CD4-positive, alpha-beta memory T cell (primary cell): ENCODE measurements at regions of chr9 and their contacts with region 1.

Region 1: GRCh38 chr9:11064897-11065296 is 452.1 kb upstream of the PTPRD start:
- DNase-seq: no peak
- H3K4me3 ChIP-seq: no peak overlapping the region
- H3K4me3 Mint-ChIP-seq: no peak overlapping the region
- H3K27ac ChIP-seq: no peak overlapping the region
- H3K27ac Mint-ChIP-seq: no peak overlapping the region
- H3K4me1 ChIP-seq: no peaks in the 10 kb centered on the region
- H3K4me1 Mint-ChIP-seq: no peaks in the 10 kb centered on the region
- H3K27me3 ChIP-seq: no peaks in the 10 kb centered on the region
- H3K27me3 Mint-ChIP-seq: no peaks in the 10 kb centered on the region

Region 2: GRCh38 chr9:10251490-10251889 is 813.4 kb before region 1 on chr9:
- CTCF ChIA-PET with region 1: no interaction called
- POLR2A ChIA-PET with region 1: no interaction called
- intact Hi-C with region 1: no loop called
- DNase-seq: no peak
- H3K4me3 ChIP-seq: no peak overlapping the region
- H3K4me3 Mint-ChIP-seq: no peak overlapping the region
- H3K27ac ChIP-seq: no peak overlapping the region
- H3K27ac Mint-ChIP-seq: no peak overlapping the region
- H3K4me1 ChIP-seq: no peaks in the 10 kb centered on the region
- H3K4me1 Mint-ChIP-seq: no peaks in the 10 kb centered on the region
- H3K27me3 ChIP-seq: no peaks in the 10 kb centered on the region
- H3K27me3 Mint-ChIP-seq: no peaks in the 10 kb centered on the region

Region 3: DNA sequence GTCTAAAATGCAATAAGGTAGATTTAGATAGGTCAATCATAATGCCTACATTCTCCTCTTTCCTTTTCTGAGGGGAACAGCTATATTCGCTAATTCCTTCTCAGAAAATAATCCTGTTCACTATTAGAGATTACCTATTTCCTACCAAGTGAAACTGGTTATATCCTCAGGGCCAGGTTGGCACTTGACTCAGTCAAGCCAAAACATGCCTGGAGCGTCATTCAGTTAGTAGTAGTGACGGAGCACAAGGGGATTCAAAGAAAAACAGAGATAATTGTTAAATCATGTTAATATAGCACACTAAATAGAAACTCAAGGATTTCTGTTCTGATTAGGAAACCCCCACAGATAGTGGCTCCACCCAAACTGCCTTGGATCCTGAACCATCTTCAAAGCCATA is 63.3 kb after region 1 on chr9:
- CTCF ChIA-PET with region 1: no interaction called
- POLR2A ChIA-PET with region 1: no interaction called
- intact Hi-C with region 1: loop called (anchors 2 kb)
- DNase-seq: no peak
- H3K4me3 ChIP-seq: no peak overlapping the region
- H3K4me3 Mint-ChIP-seq: no peak overlapping the region
- H3K27ac ChIP-seq: no peak overlapping the region
- H3K27ac Mint-ChIP-seq: no peak overlapping the region
- H3K4me1 ChIP-seq: no peaks in the 10 kb centered on the region
- H3K4me1 Mint-ChIP-seq: no peaks in the 10 kb centered on the region
- H3K27me3 ChIP-seq: no peaks in the 10 kb centered on the region
- H3K27me3 Mint-ChIP-seq: no peaks in the 10 kb centered on the region